ENCODE measurements at regions of chr1 and their contacts with region 1.

Region 1: DNA sequence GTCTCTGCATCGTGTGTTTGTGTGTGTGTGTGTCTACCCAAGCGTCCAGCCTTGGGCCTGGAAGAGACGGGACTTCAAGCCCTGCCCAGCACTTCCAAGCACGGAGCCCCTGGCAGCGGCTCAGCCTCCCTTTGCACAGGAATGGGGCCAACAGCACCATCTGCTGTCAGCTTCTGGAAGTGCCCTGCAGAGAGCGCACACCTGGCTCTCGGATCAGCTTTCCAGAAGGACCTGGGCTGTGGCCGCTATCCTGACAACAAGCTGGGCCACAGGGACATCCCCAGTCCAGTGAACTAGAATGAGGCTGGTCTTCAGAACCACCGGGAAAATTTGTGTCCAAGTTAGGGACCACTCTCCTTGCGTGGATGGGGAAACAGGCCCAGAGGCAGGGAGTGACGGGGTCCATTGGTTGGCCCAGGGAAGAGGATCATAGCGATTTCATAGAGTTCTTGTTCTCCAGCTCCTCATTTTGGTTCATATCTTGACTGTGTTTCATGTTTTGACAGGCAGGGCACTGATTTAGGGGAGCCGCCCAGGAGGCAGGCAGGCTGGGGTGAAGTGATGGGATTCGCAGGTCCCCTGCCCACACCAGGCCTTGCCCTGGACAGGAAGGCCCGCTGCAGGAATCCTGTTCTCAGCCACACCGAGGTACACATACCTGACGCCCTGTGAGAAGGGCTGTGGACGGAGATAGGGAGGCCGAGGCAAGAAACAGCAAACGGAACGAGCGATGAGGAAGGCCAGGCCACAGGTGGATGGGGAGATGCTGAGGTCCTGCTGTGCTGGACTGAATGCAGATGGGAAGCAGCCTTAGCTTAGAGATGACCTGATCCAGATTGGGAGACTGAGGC is 38.4 kb downstream of the TAS1R2 start:
- DNase-seq: peak; percentile 68
- H3K4me3 ChIP-seq: no peak overlapping the region
- H3K27ac ChIP-seq: no peak overlapping the region
- H3K4me1 ChIP-seq: no peaks in the 10 kb centered on the region
- H3K27me3 ChIP-seq: peaks cover 35% of the 10 kb centered on the region
- CTCF ChIP-seq: peak; percentile 79 to 94 (median 86)
- EP300 ChIP-seq: no peak
- POLR2A ChIP-seq: no peak

Region 2: GRCh38 chr1:18588093-18588492 is 232.9 kb before region 1 on chr1:
- in situ Hi-C with region 1: loop called in 3 of 4 experiments (anchors 5 to 10 kb)
- intact Hi-C with region 1: no loop called
- DNase-seq: no peak
- H3K4me3 ChIP-seq: no peak overlapping the region
- H3K27ac ChIP-seq: no peak overlapping the region
- H3K4me1 ChIP-seq: no peaks in the 10 kb centered on the region
- H3K27me3 ChIP-seq: peaks cover 30% of the 10 kb centered on the region
- CTCF ChIP-seq: no peak
- EP300 ChIP-seq: no peak
- POLR2A ChIP-seq: no peak

Region 3: DNA sequence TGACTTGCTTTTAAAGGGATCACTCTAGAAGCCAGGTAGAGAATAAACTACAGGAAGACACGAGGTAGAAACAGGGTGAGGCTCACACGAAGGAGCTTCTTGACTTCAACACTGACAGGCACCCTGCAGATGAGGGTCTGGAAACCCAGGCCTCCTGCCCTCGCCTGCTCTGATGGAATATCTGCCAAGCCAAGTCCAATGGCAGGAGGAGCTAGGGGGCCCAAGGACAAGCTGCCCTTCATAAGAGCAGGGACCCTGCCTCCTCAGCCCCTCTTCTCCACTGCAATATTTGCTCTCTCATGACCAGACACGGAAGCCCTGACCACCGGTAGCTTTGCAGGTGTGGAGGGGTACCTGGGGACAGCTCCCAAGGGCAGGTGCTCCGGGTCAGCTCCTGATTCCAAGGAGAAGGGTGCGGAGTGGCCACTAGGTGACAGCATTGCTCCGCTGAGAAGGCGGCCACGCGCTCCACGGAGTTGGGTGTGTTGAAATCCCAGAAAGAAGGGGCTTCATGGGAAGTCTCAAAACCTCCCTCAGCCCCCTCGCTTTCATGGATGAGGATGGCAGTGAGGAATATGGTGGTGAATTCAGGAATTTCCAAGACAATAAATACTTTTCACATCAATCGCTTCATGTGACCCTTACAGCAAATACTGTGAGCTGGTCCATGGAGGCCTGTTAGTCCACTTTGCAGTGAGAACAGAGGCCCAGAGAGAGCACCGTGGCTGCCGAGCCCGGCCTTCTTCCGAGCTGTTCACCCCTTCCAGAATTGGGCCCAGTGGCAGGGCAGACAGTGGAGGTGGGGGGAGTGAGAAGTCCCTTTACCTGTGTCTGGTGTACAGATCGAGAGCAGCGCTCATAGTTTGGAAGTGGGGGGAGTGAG is 223.6 kb before region 1 on chr1:
- in situ Hi-C with region 1: loop called in 3 of 4 experiments (anchors 5 to 10 kb)
- intact Hi-C with region 1: loop called (anchors 5 kb)
- DNase-seq: peak; percentile 54
- H3K4me3 ChIP-seq: no peak overlapping the region
- H3K27ac ChIP-seq: no peak overlapping the region
- H3K4me1 ChIP-seq: peaks cover 0 to 6% (median 0%) of the 10 kb centered on the region in 4 donors
- H3K27me3 ChIP-seq: peaks cover 30% of the 10 kb centered on the region
- CTCF ChIP-seq: peak; percentile 89 to 94 (median 92)
- EP300 ChIP-seq: no peak
- POLR2A ChIP-seq: no peak

Region 4: DNA sequence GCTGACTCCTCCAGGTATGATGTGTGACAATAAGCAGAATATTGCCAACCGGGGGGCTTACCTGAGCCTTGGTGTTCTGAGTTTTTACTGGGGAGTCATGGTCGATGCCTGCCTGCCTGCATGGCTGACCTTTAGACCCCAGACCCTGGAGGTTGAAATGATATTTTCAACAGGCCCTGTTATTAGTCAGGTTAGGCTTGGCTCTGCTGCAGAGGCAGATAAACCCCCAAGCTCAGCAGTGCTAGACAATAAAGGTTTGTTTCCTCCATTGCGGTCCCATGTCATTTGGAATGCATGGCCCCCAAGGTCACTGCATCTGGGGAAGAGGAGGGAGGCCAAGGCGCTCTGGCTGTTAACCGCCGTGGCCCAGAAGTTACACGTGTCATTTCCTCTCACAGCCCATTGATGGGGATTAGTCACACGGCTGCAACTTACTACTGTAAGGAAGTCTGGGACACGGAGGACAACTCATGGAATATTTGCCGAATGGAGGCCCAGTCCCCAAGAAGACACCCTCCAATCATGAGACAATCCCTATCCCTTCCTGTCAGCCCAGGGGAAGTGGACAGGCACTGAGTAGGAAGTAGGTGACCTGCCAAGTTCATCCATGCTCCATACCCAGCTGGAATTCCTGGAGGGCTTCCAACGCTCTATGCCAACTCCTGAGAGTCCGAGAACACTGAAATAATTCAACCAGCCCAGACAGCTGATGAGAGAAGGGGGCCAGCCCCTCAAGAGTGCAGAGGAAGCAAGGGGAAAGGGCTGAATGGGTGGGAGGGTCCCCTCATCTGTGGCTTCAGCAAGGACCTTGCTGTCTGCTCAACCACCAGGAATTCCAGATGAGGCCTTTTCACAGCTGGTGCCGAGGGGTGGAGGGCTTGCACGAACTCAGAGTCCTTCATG is 58.8 kb before region 1 on chr1:
- in situ Hi-C with region 1: no loop called
- intact Hi-C with region 1: no loop called
- DNase-seq: no peak
- H3K4me3 ChIP-seq: no peak overlapping the region
- H3K27ac ChIP-seq: no peak overlapping the region
- H3K4me1 ChIP-seq: no peaks in the 10 kb centered on the region
- H3K27me3 ChIP-seq: peaks cover 44% of the 10 kb centered on the region
- CTCF ChIP-seq: no peak
- EP300 ChIP-seq: no peak
- POLR2A ChIP-seq: no peak